Posterior vena cava (tissue), 2 donors: ENCODE measurements at regions of chr5 and their contacts with region 1.

Region 1: GRCh38 chr5:157575381-157576020 is at the start of gene ADAM19:
- DNase-seq: peak; percentile 87
- total RNA-seq, gene ADAM19: 37.0 to 47.0 TPM

Region 2: GRCh38 chr5:157502143-157502647 is 73.3 kb before region 1 on chr5:
- intact Hi-C with region 1: loop called in 1 of 2 experiments (anchors 10 kb)
- DNase-seq: no peak

Region 3: GRCh38 chr5:157535042-157535865 is 40.2 kb before region 1 on chr5:
- intact Hi-C with region 1: loop called in 1 of 2 experiments (anchors 5 kb)
- DNase-seq: peak; percentile 84

Region 4: DNA sequence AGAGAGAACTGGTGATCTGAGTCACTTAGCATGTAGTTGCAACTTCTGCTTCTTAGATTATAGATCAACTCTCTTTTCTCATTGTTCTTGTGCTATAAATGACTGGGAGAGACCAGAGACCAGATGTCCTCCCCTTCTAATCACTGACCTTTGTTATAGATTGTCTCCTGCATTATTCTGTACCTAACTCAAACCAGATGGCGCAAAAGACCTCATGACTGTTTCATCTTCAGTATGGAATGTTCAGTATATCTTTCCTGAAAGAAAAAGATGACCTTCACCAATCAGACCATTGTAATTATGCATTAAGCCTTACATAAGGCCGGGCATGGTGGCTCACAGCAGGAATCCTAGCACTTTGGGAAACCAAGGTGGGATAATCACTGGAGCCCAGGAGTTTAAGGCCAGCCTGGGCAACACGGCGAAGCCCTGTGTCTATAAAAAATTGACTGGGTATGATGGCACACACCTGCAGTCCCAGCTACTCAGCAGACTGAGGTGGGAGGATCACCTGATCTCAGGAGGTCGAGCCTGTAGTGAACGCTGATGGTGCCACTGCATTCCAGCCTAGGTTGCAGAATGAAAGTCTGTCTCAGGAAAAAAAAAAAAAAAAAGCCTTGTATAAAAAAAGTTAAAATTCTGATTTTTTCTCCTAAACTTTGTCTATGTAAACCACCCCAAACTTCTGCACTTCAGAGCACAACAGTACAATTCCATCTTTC is 30.7 kb after region 1 on chr5:
- intact Hi-C with region 1: loop called in 1 of 2 experiments (anchors 1 kb)
- DNase-seq: no peak

Region 5: GRCh38 chr5:157748760-157749461 is 173.4 kb after region 1 on chr5:
- intact Hi-C with region 1: no loop called
- DNase-seq: no peak